Panc1 (cell line): ENCODE measurements at regions of chr10 and their contacts with region 1.

Region 1: GRCh38 chr10:43407576-43408330 is 1.2 kb downstream of the HNRNPF start:
- DNase-seq: peak; percentile 57
- ATAC-seq: peak; percentile 65
- H3K4me3 ChIP-seq: peak overlapping the region; percentile 68 to 96
- H3K27ac ChIP-seq: peak overlapping the region; percentile 93
- H3K4me1 ChIP-seq: peaks cover 20% of the 10 kb centered on the region
- H3K27me3 ChIP-seq: no peaks in the 10 kb centered on the region
- CTCF ChIP-seq: no peak

Region 2: GRCh38 chr10:43120929-43121314 is 286.8 kb before region 1 on chr10:
- CTCF ChIA-PET with region 1: no interaction called
- POLR2A ChIA-PET with region 1: no interaction called
- in situ Hi-C with region 1: no loop called
- intact Hi-C with region 1: no loop called
- DNase-seq: no peak
- ATAC-seq: no peak
- H3K4me3 ChIP-seq: no peak overlapping the region
- H3K27ac ChIP-seq: no peak overlapping the region
- H3K4me1 ChIP-seq: no peaks in the 10 kb centered on the region
- H3K27me3 ChIP-seq: no peaks in the 10 kb centered on the region
- CTCF ChIP-seq: no peak

Region 3: GRCh38 chr10:43427166-43427825 is 19.5 kb after region 1 on chr10:
- CTCF ChIA-PET with region 1: interaction called, 4 read pairs
- POLR2A ChIA-PET with region 1: interaction called, 15 read pairs
- in situ Hi-C with region 1: no loop called
- intact Hi-C with region 1: no loop called
- DNase-seq: no peak
- ATAC-seq: no peak
- H3K4me3 ChIP-seq: no peak overlapping the region
- H3K27ac ChIP-seq: no peak overlapping the region
- H3K4me1 ChIP-seq: no peaks in the 10 kb centered on the region
- H3K27me3 ChIP-seq: no peaks in the 10 kb centered on the region
- CTCF ChIP-seq: no peak